Left ventricle myocardium inferior (tissue), 1 donor: ENCODE measurements at regions of chr12 and their contacts with region 1.

Region 1: GRCh38 chr12:92987362-92987761 is 58.3 kb upstream of the EEA1 start:
- DNase-seq: no peak
- H3K4me3 ChIP-seq: peak overlapping the region; percentile 2
- H3K27ac ChIP-seq: peak overlapping the region; percentile 85
- H3K4me1 ChIP-seq: peaks cover 24% of the 10 kb centered on the region
- H3K27me3 ChIP-seq: no peaks in the 10 kb centered on the region
- CTCF ChIP-seq: peak; percentile 71

Region 2: GRCh38 chr12:92928962-92929915 is 58.1 kb before region 1 on chr12 and contains the start of gene EEA1:
- intact Hi-C with region 1: no loop called
- DNase-seq: peak; percentile 97
- H3K4me3 ChIP-seq: peak within 1 kb of the TSS; percentile 90
- H3K27ac ChIP-seq: peak within 1 kb of the TSS; percentile 99
- H3K4me1 ChIP-seq: peaks cover 49% of the 10 kb centered on the region
- H3K27me3 ChIP-seq: no peaks in the 10 kb centered on the region
- CTCF ChIP-seq: peak; percentile 43
- total RNA-seq, gene EEA1: 23.9 TPM

Region 3: DNA sequence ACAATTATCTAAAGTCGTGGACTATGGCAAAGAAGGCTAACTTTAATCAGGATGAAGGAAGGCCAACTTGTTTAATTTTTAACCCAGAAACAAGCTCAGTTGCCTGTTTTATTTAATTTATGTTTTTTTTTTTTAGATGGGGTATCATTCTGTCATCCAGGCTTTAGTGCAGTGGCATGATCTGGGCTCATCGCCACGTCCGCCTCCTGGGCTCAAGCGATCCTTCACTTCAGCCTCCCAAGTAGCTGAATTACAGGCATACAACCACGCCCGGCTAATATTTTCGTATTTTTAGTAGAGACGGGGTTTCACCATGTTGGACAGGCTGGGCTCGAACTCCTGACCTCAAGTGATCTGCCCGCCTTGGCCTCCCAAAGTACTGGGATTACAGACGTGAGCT is 410.1 kb after region 1 on chr12:
- intact Hi-C with region 1: loop called (anchors 2 kb)
- DNase-seq: no peak
- H3K4me3 ChIP-seq: no peak overlapping the region
- H3K27ac ChIP-seq: peak overlapping the region; percentile 59
- H3K4me1 ChIP-seq: peaks cover 55% of the 10 kb centered on the region
- H3K27me3 ChIP-seq: no peaks in the 10 kb centered on the region
- CTCF ChIP-seq: no peak